ENCODE measurements at regions of chr9 and their contacts with region 1.

Region 1: GRCh38 chr9:34437006-34437925 is 21.1 kb downstream of the FAM219A start:
- DNase-seq: peak; percentile 26 to 76 (median 41)
- ATAC-seq: peak; percentile 90
- H3K4me3 ChIP-seq: no peak overlapping the region
- H3K27ac ChIP-seq: no peak overlapping the region
- H3K4me1 ChIP-seq: no peaks in the 10 kb centered on the region
- H3K27me3 ChIP-seq: no peaks in the 10 kb centered on the region
- CTCF ChIP-seq: peak; percentile 72 to 88 (median 77)
- EP300 ChIP-seq: no peak
- POLR2A ChIP-seq: no peak
- RAD21 ChIP-seq: peak; percentile 63 to 81

Region 2: GRCh38 chr9:34426347-34427074 is 10.8 kb before region 1 on chr9:
- CTCF ChIA-PET with region 1: no interaction called
- POLR2A ChIA-PET with region 1: no interaction called
- in situ Hi-C with region 1: no loop called
- intact Hi-C with region 1: no loop called
- DNase-seq: peak; percentile 9 to 37 (median 17)
- ATAC-seq: peak; percentile 76
- H3K4me3 ChIP-seq: no peak overlapping the region
- H3K27ac ChIP-seq: no peak overlapping the region
- H3K4me1 ChIP-seq: peaks cover 0 to 2% of the 10 kb centered on the region in 2 experiments; a peak in 3 of 5 replicates
- H3K27me3 ChIP-seq: no peaks in the 10 kb centered on the region
- CTCF ChIP-seq: no peak
- EP300 ChIP-seq: no peak
- POLR2A ChIP-seq: no peak
- RAD21 ChIP-seq: no peak

Region 3: DNA sequence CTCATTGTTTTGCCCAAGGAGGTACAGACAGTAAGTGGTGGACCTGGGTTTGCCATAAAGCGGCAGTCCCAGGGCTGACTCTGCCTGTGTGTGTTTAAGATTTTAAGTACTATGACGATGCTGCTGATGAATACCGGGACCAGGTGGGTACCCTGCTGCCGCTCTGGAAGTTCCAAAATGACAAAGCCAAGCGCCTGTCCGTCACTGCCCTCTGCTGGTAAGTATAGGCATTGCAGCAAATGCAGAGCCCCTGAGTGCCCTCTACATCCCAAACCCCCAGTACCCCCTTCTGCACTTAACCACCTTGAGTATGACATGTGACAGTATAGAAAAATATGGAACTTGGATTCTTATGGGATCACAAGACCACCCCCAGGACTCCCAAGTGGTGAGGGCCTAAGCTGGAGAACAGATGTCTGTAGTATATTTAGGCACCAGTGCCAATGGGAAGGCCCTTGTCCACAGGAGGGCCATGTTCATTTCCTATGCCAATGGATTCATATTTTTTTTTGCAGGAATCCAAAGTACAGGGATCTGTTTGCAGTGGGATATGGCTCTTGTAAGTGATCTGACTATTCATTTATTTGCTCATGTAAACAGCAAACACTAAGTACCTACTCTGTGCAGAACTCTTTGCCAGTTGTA is 63.5 kb after region 1 on chr9:
- CTCF ChIA-PET with region 1: interaction called, 11 read pairs
- POLR2A ChIA-PET with region 1: interaction called, 3 read pairs
- in situ Hi-C with region 1: no loop called
- intact Hi-C with region 1: loop called (anchors 1 kb)
- DNase-seq: peak; percentile 60 to 75 (median 68)
- ATAC-seq: peak; percentile 79
- H3K4me3 ChIP-seq: no peak overlapping the region
- H3K27ac ChIP-seq: no peak overlapping the region
- H3K4me1 ChIP-seq: no peaks in the 10 kb centered on the region
- H3K27me3 ChIP-seq: no peaks in the 10 kb centered on the region; a peak in 1 of 5 replicates
- CTCF ChIP-seq: peak; percentile 85 to 88 (median 85)
- EP300 ChIP-seq: no peak
- POLR2A ChIP-seq: no peak
- RAD21 ChIP-seq: peak; percentile 70 to 85

Region 4: DNA sequence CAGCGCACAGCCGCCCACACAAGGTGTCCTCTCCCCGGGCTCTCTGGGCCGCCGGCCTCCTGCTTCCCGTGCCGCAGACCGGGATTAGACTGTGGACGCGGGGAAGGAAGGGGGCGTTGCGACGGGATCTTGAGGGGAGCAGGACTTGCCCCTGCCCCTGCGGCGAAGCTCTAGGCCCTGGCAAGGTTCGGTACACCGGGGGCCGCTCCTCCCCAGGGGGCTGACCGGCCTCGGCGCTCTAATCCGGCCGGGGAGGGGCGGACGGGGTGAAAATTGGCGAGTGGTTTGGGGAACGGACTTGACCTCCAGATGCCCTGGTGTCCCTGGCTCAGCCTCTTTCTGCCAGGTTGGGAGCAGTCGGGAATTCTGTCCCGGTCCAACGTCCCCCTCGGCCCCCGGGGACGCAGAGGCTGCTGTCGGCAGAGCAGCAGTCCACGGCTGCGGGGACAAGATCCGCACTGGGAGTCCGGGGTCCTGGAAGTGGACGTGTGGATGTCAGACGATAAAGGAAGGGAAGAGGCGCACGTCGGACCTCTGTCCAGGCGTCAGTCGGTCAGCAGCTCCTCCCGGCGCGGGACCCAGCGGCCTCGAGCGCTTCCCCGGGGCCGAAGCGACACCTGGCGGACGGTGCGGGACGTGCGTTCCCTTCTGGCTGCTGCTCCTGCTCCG is 154.1 kb after region 1 on chr9:
- CTCF ChIA-PET with region 1: interaction called, 7 read pairs
- POLR2A ChIA-PET with region 1: no interaction called
- in situ Hi-C with region 1: no loop called
- intact Hi-C with region 1: loop called (anchors 5 kb)
- DNase-seq: peak; percentile 79 to 84 (median 81)
- ATAC-seq: peak; percentile 99
- H3K4me3 ChIP-seq: no peak overlapping the region
- H3K27ac ChIP-seq: no peak overlapping the region
- H3K4me1 ChIP-seq: peaks cover 0 to 34% of the 10 kb centered on the region in 2 experiments; a peak in 2 of 5 replicates
- H3K27me3 ChIP-seq: peaks cover 10 to 47% of the 10 kb centered on the region in 2 experiments
- CTCF ChIP-seq: peak; percentile 67 to 93 (median 85)
- EP300 ChIP-seq: no peak
- POLR2A ChIP-seq: no peak
- RAD21 ChIP-seq: peak; percentile 63 to 90